Naive thymus-derived CD8-positive, alpha-beta T cell (primary cell): ENCODE measurements at regions of chr13 and their contacts with region 1.

Region 1: GRCh38 chr13:99969919-99970621 is 1.5 kb downstream of the ZIC5 start:
- DNase-seq: peak in 3 of 10 donors; percentile 40 to 50 (median 47)
- ATAC-seq: peak; percentile 40 to 66
- H3K4me3 Mint-ChIP-seq: peak overlapping the region; percentile 71 to 95 (median 82)
- H3K27ac Mint-ChIP-seq: peak overlapping the region in 4 of 10 donors; percentile 38 to 88 (median 78)
- H3K4me1 Mint-ChIP-seq: peaks cover 10 to 25% (median 19%) of the 10 kb centered on the region in 4 donors
- H3K27me3 Mint-ChIP-seq: peaks cover 60 to 85% (median 66%) of the 10 kb centered on the region in 5 donors

Region 2: DNA sequence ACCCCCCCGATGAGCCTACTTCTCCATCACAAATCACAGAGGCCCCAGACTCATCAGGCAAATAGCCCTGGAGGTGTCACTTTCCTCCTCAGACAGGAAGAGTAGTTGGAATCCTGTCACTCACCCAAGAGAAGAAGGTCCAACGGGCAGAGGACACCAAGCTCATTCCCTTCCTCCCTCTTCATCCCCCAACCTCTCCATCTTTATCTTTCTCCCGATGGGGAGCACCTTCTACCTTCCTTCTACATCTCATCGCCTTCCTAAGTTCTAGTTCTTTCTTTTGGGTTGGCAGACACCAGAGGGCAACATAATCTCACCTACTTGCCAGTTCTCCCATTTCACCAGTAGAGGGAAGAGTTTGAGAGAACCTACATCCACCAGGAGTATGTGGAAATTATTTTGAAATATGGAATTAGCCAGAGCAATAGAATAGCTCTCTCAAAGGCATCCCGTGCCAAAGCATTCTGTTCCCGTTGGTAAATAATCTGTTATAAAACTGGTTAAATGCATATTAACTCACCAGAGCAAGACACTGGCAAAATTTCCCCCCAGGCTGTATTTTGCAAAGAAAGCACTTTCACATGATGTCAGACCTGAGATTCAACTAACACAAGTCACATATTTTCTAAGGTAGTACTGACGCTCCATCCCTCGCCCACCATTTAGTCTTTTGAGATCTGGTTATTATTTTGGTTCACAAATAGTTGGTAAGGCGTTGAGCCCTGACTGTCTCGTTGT is 53.5 kb before region 1 on chr13:
- POLR2A ChIA-PET with region 1: no interaction called
- DNase-seq: peak in 7 of 10 donors; percentile 7 to 58 (median 31)
- ATAC-seq: peak; percentile 74 to 87
- H3K4me3 Mint-ChIP-seq: no peak overlapping the region
- H3K27ac Mint-ChIP-seq: peak overlapping the region in 2 of 10 donors; percentile 0 to 56
- H3K4me1 Mint-ChIP-seq: peaks cover 3 to 11% (median 6%) of the 10 kb centered on the region in 4 donors
- H3K27me3 Mint-ChIP-seq: peaks cover 10 to 29% (median 22%) of the 10 kb centered on the region in 5 donors

Region 3: DNA sequence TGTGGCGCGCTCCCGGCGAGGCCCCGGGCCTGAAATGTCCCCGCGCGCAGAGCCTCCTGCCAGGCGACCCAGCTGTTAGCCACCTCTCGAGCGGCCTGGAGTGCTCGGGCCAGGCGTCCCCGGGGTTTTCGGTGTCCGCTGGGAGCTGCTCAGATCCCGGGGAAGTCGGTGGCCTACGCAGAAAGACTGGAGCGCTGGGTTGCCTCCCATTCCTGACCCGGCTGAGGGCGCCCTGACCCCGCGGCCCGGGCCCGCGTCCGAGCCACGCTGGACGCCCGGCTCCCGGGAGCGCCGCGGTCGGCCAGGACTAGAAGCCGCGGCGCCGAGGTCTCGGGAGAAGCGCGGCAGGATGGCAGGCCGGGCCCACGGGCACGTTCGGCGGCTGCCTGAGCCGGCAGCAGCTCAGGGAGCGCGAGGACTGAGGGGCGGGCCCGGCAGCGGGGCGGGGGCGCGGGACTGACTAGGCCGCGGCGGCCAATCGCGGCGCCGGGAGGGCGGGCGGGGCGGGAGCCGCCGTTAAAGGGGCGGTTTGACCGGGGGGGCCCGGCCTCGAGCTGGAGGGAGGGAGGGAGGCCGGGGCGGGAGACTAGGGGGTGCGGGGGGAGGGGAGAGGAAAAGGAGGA is 10.2 kb after region 1 on chr13:
- POLR2A ChIA-PET with region 1: interaction called, 15 read pairs
- DNase-seq: peak in 9 of 10 donors; percentile 43 to 76 (median 55)
- ATAC-seq: peak; percentile 74 to 82
- H3K4me3 Mint-ChIP-seq: peak overlapping the region in 5 of 10 donors; percentile 25 to 45 (median 44)
- H3K27ac Mint-ChIP-seq: no peak overlapping the region
- H3K4me1 Mint-ChIP-seq: peaks cover 8 to 20% (median 14%) of the 10 kb centered on the region in 4 donors
- H3K27me3 Mint-ChIP-seq: peaks cover 32 to 69% (median 52%) of the 10 kb centered on the region in 5 donors

Region 4: DNA sequence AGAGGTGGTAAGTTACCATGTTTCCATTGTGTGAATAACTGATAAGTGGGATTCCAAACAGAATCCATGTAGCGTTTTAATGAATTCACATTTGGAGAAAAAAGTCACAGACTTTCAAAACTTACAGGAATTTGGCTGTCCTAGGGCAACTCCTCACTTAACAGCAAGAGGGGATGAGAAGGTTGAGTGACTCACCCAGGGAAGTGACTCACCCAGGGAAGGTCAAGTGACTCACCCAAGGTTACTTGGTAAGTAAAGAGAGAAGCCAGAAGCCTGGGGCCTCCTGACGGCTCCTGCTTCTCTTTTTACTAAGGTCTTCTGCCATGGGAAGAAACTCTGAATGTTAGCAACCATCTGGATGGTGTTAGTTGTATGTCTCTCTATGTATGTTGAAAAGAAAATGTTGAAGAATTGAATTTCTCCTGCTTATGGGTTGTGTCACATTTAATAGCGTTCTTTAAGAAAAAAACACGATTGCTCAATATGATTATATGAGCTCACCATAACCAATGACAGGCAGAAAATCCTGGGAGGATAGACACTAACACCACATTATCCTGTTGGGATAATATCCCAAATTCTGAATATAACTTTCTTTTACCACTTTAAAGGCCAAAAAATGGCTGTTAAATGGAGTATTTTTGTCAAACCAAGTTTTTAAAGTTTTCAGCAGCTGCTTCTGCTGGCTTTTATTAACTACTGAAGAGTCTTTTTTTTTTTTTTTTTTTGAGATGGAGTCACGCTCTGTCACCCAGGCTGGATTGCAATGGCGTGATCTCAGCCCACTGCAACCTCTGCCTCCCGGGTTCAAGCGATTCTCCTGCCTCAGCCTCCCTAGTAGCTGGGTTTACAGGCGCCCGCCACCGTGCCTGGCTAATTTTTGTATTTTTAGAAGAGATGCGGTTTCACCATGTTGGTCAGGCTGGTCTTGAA is 422.9 kb after region 1 on chr13:
- POLR2A ChIA-PET with region 1: no interaction called
- DNase-seq: peak in 1 of 10 donors; percentile 29
- ATAC-seq: peak in 1 of 2 donors; percentile 39
- H3K4me3 Mint-ChIP-seq: peak overlapping the region in 2 of 10 donors; percentile 5 to 13
- H3K27ac Mint-ChIP-seq: peak overlapping the region in 2 of 10 donors; percentile 49 to 63
- H3K4me1 Mint-ChIP-seq: peaks cover 0 to 30% (median 10%) of the 10 kb centered on the region in 4 donors
- H3K27me3 Mint-ChIP-seq: no peaks in the 10 kb centered on the region